IMR-90 (cell line): ENCODE measurements at regions of chr3 and their contacts with region 1.

Region 1: GRCh38 chr3:151146071-151146730 is 56.8 kb downstream of the GPR171 start:
- DNase-seq: peak; percentile 69
- ATAC-seq: peak; percentile 97
- H3K4me3 ChIP-seq: no peak overlapping the region
- H3K27ac ChIP-seq: no peak overlapping the region
- H3K4me1 ChIP-seq: peaks cover 2% of the 10 kb centered on the region; the same call in 1 of the 2 replicates
- H3K27me3 ChIP-seq: peaks cover 30% of the 10 kb centered on the region
- CTCF ChIP-seq: peak; percentile 87
- POLR2A ChIP-seq: no peak
- RAD21 ChIP-seq: peak; percentile 90

Region 2: DNA sequence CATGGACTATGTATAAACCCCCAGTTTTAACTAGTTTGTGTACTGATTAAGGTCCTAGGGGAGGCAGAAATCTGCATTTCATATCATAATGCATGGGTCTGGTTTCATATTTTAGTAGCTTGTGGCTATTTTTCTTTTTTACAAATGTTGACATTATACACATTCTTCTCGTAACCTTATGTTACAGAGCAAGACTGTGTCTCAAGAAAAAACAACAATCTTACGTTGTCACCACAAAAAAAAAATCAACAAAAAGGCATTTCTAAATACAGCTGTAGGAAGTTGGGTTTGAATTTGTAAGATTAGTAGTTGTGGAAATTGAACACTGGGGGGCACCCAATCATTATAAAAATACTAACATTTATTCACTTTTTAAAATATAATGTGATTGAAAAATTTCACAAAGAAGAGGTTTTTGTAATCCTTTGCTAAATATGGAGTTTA is 617.8 kb before region 1 on chr3:
- CTCF ChIA-PET with region 1: no interaction called
- POLR2A ChIA-PET with region 1: no interaction called
- dilution Hi-C with region 1: no loop called
- in situ Hi-C with region 1: no loop called
- intact Hi-C with region 1: loop called (anchors 2 kb)
- DNase-seq: peak; percentile 52
- ATAC-seq: peak; percentile 63
- H3K4me3 ChIP-seq: no peak overlapping the region
- H3K27ac ChIP-seq: no peak overlapping the region
- H3K4me1 ChIP-seq: no peaks in the 10 kb centered on the region
- H3K27me3 ChIP-seq: no peaks in the 10 kb centered on the region
- CTCF ChIP-seq: peak; percentile 51
- POLR2A ChIP-seq: no peak
- RAD21 ChIP-seq: peak; percentile 48

Region 3: DNA sequence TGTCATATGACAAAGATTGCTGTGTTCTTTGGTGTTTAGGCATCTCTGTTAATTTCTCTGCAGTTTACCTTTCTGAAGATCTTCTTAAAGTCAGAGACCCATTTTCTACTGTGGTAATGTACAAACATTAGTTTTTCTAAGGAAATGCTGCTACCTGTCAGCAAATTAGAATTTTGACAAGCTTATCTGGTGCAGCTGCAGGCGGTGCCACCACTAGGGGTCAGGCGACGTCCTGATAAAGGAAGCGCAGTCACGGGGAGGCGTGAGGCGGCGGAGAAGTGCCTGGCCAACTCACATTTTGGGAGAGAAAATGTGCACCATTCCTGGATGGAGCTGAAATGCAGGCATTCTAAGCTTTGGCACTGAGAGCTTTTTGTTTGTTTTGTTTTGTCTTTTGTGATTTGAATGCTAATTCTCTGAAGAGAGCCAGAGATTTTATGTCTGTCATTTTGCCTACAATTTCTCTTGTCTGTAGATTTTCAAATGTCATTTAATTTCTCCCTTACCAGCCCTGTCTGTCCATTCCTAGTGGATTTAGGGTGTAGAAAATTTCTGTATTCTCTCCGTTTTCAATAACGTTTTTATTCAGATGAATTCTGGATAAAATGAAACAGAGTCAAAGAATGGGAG is 358.3 kb before region 1 on chr3:
- CTCF ChIA-PET with region 1: interaction called, 5 read pairs
- POLR2A ChIA-PET with region 1: no interaction called
- dilution Hi-C with region 1: no loop called
- in situ Hi-C with region 1: loop called (anchors 25 kb)
- intact Hi-C with region 1: loop called (anchors 1 kb)
- DNase-seq: peak; percentile 64
- ATAC-seq: peak; percentile 93
- H3K4me3 ChIP-seq: no peak overlapping the region
- H3K27ac ChIP-seq: no peak overlapping the region
- H3K4me1 ChIP-seq: no peaks in the 10 kb centered on the region
- H3K27me3 ChIP-seq: peaks cover 23% of the 10 kb centered on the region
- CTCF ChIP-seq: peak; percentile 81
- POLR2A ChIP-seq: no peak
- RAD21 ChIP-seq: peak; percentile 73

Region 4: DNA sequence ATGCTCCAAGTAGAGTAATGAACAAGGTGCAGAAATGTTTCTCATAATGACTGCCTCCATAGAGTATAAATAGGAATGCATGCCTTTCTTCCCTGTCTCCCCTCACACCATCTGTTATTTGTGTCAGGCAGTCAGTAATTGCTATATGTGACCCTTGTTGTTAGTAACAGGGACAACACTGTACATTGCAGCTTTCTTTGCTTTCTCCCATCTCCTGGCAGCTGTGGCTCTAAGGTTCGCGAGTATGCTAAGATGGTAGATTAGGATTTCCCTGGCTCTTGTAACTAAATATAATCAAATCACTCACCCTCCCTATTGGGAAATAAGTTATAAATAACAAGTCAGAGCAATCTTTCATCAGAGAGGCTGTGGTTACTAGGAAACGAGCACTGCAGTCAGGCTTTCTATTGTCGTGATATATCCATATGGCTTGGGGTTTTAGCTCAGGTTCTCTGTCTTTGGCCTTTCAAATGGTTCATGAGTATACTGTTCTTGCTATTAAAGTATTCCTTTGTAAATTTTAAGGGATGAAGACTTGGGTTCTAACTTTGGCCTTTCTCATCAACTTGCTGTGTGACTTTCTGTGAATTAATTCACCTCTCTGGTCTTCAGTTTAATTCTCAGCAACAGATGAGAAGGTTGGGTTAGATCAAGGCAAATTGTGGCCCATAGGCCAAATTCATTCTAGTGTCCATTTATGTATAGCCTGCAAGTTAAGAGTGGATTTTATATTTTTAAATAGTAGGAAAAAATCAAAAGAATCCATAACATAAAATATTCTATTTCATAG is 232.9 kb before region 1 on chr3:
- CTCF ChIA-PET with region 1: no interaction called
- POLR2A ChIA-PET with region 1: no interaction called
- dilution Hi-C with region 1: no loop called
- in situ Hi-C with region 1: loop called (anchors 25 kb)
- intact Hi-C with region 1: no loop called
- DNase-seq: no peak
- ATAC-seq: no peak
- H3K4me3 ChIP-seq: no peak overlapping the region
- H3K27ac ChIP-seq: no peak overlapping the region
- H3K4me1 ChIP-seq: no peaks in the 10 kb centered on the region
- H3K27me3 ChIP-seq: peaks cover 16% of the 10 kb centered on the region
- CTCF ChIP-seq: no peak
- POLR2A ChIP-seq: no peak
- RAD21 ChIP-seq: no peak

Region 5: GRCh38 chr3:150945226-150946032 is 200.8 kb before region 1 on chr3:
- CTCF ChIA-PET with region 1: no interaction called
- POLR2A ChIA-PET with region 1: no interaction called
- dilution Hi-C with region 1: no loop called
- in situ Hi-C with region 1: no loop called
- intact Hi-C with region 1: no loop called
- DNase-seq: peak; percentile 25
- ATAC-seq: no peak
- H3K4me3 ChIP-seq: no peak overlapping the region
- H3K27ac ChIP-seq: no peak overlapping the region
- H3K4me1 ChIP-seq: no peaks in the 10 kb centered on the region
- H3K27me3 ChIP-seq: peaks cover 1% of the 10 kb centered on the region; the same call in 1 of the 2 replicates
- CTCF ChIP-seq: no peak
- POLR2A ChIP-seq: no peak
- RAD21 ChIP-seq: no peak

Region 6: DNA sequence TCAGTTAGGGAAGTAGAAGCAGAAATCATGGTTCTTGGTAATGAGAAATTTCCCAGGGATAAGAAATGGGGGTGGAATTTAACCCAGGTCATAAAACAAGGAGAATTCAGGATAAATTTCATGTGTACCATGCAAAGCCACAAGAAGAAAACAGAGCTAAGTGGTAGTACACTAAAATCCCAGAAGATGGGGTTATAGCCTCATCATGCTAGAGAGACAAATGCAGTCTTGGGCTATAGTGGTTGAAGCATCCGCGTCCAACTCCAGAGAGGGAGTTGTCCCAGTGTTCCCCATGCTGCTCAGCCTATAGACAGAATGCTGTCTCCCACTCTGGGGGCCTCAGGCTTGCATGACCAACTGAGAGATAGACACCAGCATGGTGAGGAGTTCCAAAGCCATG is 137.5 kb before region 1 on chr3:
- CTCF ChIA-PET with region 1: interaction called, 5 read pairs
- POLR2A ChIA-PET with region 1: no interaction called
- dilution Hi-C with region 1: no loop called
- in situ Hi-C with region 1: loop called (anchors 10 kb)
- intact Hi-C with region 1: loop called (anchors 1 kb)
- DNase-seq: peak; percentile 66
- ATAC-seq: peak; percentile 92
- H3K4me3 ChIP-seq: no peak overlapping the region
- H3K27ac ChIP-seq: no peak overlapping the region
- H3K4me1 ChIP-seq: no peaks in the 10 kb centered on the region
- H3K27me3 ChIP-seq: peaks cover 14% of the 10 kb centered on the region
- CTCF ChIP-seq: peak; percentile 65
- POLR2A ChIP-seq: no peak
- RAD21 ChIP-seq: peak; percentile 74

Region 7: GRCh38 chr3:151034303-151034702 is 111.9 kb before region 1 on chr3:
- CTCF ChIA-PET with region 1: no interaction called
- POLR2A ChIA-PET with region 1: no interaction called
- dilution Hi-C with region 1: no loop called
- in situ Hi-C with region 1: no loop called
- intact Hi-C with region 1: no loop called
- DNase-seq: no peak
- ATAC-seq: no peak
- H3K4me3 ChIP-seq: no peak overlapping the region
- H3K27ac ChIP-seq: no peak overlapping the region
- H3K4me1 ChIP-seq: no peaks in the 10 kb centered on the region
- H3K27me3 ChIP-seq: no peaks in the 10 kb centered on the region; the same call in 1 of the 2 replicates
- CTCF ChIP-seq: no peak
- POLR2A ChIP-seq: no peak
- RAD21 ChIP-seq: no peak

Region 8: GRCh38 chr3:151404316-151404715 is 258.1 kb after region 1 on chr3:
- CTCF ChIA-PET with region 1: no interaction called
- POLR2A ChIA-PET with region 1: no interaction called
- dilution Hi-C with region 1: no loop called
- in situ Hi-C with region 1: no loop called
- intact Hi-C with region 1: no loop called
- DNase-seq: peak; percentile 72
- ATAC-seq: peak; percentile 57
- H3K4me3 ChIP-seq: no peak overlapping the region
- H3K27ac ChIP-seq: no peak overlapping the region
- H3K4me1 ChIP-seq: peaks cover 2% of the 10 kb centered on the region
- H3K27me3 ChIP-seq: no peaks in the 10 kb centered on the region
- CTCF ChIP-seq: no peak
- POLR2A ChIP-seq: no peak
- RAD21 ChIP-seq: no peak

Region 9: GRCh38 chr3:151425627-151426335 is 279.6 kb after region 1 on chr3:
- CTCF ChIA-PET with region 1: no interaction called
- POLR2A ChIA-PET with region 1: no interaction called
- dilution Hi-C with region 1: no loop called
- in situ Hi-C with region 1: no loop called
- intact Hi-C with region 1: no loop called
- DNase-seq: no peak
- ATAC-seq: no peak
- H3K4me3 ChIP-seq: no peak overlapping the region
- H3K27ac ChIP-seq: no peak overlapping the region
- H3K4me1 ChIP-seq: peaks cover 4% of the 10 kb centered on the region; the same call in 1 of the 2 replicates
- H3K27me3 ChIP-seq: no peaks in the 10 kb centered on the region
- CTCF ChIP-seq: peak; percentile 34; the same call in 1 of the 2 replicates
- POLR2A ChIP-seq: no peak
- RAD21 ChIP-seq: no peak